MCF 10A (cell line): ENCODE measurements at regions of chr11 and their contacts with region 1.

Region 1: GRCh38 chr11:31240338-31240904 is 129.1 kb downstream of the DCDC1 start:
- DNase-seq: peak; percentile 67
- H3K4me3 Mint-ChIP-seq: no peak overlapping the region
- H3K27ac Mint-ChIP-seq: no peak overlapping the region
- H3K4me1 Mint-ChIP-seq: peaks cover 4% of the 10 kb centered on the region
- H3K27me3 Mint-ChIP-seq: peaks cover 17% of the 10 kb centered on the region
- CTCF ChIP-seq: peak; percentile 71

Region 2: DNA sequence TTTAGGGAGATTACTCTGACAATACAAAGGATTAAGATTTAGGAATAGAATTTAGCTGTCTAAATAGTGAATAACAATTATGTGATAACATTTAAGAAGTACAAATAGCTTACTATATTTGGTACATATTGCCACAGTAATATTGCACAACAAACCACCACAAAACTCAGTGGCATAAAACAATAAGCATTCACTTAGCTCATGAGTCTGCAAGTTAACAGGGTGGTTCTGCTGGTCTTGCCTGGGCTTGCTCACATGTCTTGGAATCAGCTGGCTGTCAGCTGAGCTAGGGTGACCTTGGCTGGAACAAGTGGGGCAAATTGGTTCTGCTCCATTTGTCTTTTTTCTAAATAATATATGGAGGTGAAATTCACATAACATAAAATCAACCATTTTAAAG is 14.0 kb after region 1 on chr11:
- CTCF ChIA-PET with region 1: interaction called, 12 read pairs
- POLR2A ChIA-PET with region 1: interaction called, 4 read pairs
- intact Hi-C with region 1: no loop called
- DNase-seq: peak; percentile 54
- H3K4me3 Mint-ChIP-seq: no peak overlapping the region
- H3K27ac Mint-ChIP-seq: peak overlapping the region; percentile 1
- H3K4me1 Mint-ChIP-seq: peaks cover 11% of the 10 kb centered on the region
- H3K27me3 Mint-ChIP-seq: peaks cover 53% of the 10 kb centered on the region
- CTCF ChIP-seq: no peak

Region 3: GRCh38 chr11:31387379-31387778 is 147.0 kb after region 1 on chr11:
- CTCF ChIA-PET with region 1: interaction called, 10 read pairs
- POLR2A ChIA-PET with region 1: no interaction called
- intact Hi-C with region 1: no loop called
- DNase-seq: no peak
- H3K4me3 Mint-ChIP-seq: no peak overlapping the region
- H3K27ac Mint-ChIP-seq: no peak overlapping the region
- H3K4me1 Mint-ChIP-seq: no peaks in the 10 kb centered on the region
- H3K27me3 Mint-ChIP-seq: no peaks in the 10 kb centered on the region
- CTCF ChIP-seq: no peak

Region 4: DNA sequence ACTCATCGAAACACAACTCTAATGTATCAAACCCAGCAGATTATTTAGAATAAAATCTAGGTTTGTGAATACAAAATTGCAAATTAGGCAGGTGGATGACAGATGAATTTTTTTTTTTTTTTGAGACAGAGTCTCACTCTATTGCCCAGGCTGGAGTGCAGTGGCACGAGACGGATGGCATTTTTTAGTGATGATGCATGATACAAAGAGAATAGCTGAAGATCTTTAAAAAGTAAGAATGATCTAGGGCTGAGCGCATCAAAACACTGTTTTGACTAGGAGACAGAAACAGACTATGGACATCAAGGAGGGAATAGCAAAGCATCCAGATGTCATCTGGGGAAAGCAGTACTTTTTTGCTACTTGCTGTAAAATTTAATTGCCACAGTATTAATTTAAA is 205.2 kb after region 1 on chr11:
- CTCF ChIA-PET with region 1: no interaction called
- POLR2A ChIA-PET with region 1: no interaction called
- intact Hi-C with region 1: no loop called
- DNase-seq: no peak
- H3K4me3 Mint-ChIP-seq: no peak overlapping the region
- H3K27ac Mint-ChIP-seq: no peak overlapping the region
- H3K4me1 Mint-ChIP-seq: peaks cover 10% of the 10 kb centered on the region
- H3K27me3 Mint-ChIP-seq: no peaks in the 10 kb centered on the region
- CTCF ChIP-seq: no peak

Region 5: DNA sequence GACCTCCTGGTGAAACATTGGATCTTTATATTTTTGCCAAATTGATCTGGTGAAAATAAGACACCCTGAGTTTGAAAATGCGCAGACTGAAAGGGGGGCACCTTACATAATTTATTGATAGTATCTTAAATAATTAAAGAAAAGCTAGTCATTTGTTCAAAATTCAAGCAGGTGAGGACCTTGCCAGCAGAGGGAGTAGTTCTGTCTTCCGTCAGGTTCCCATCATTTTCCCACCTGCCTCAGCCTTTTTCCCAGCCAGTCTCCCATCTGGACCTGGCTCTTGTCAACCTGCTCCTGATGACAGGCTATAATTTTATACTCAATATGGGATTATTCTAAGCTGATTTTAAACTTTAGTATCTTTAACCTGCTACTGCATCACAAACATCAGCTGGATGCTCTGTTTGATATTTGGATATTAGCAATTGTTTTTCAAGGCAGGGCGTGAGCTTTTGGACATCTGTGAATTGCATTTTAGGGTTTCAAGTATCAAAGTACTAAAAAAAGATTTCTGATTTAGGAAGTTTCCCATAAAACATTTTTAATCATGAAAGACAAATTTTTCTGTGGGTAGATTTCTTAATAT is 401.1 kb after region 1 on chr11:
- CTCF ChIA-PET with region 1: interaction called, 5 read pairs
- POLR2A ChIA-PET with region 1: no interaction called
- intact Hi-C with region 1: loop called (anchors 5 kb)
- DNase-seq: peak; percentile 61
- H3K4me3 Mint-ChIP-seq: no peak overlapping the region
- H3K27ac Mint-ChIP-seq: no peak overlapping the region
- H3K4me1 Mint-ChIP-seq: peaks cover 11% of the 10 kb centered on the region
- H3K27me3 Mint-ChIP-seq: no peaks in the 10 kb centered on the region
- CTCF ChIP-seq: peak; percentile 76

Region 6: GRCh38 chr11:32006799-32007388 is 766.5 kb after region 1 on chr11:
- CTCF ChIA-PET with region 1: interaction called, 9 read pairs
- POLR2A ChIA-PET with region 1: no interaction called
- intact Hi-C with region 1: loop called (anchors 1 kb)
- DNase-seq: peak; percentile 53
- H3K4me3 Mint-ChIP-seq: no peak overlapping the region
- H3K27ac Mint-ChIP-seq: no peak overlapping the region
- H3K4me1 Mint-ChIP-seq: no peaks in the 10 kb centered on the region
- H3K27me3 Mint-ChIP-seq: peaks cover 41% of the 10 kb centered on the region
- CTCF ChIP-seq: peak; percentile 60